Dendritic cell treated with granulocyte-macrophage colony-stimulating factor and Interleukin-4, amounts not matched to agents 40 ng/mL and 50 ng/mL, for 4 days (primary cell): ENCODE measurements at regions of chr3 and their contacts with region 1.

Region 1: DNA sequence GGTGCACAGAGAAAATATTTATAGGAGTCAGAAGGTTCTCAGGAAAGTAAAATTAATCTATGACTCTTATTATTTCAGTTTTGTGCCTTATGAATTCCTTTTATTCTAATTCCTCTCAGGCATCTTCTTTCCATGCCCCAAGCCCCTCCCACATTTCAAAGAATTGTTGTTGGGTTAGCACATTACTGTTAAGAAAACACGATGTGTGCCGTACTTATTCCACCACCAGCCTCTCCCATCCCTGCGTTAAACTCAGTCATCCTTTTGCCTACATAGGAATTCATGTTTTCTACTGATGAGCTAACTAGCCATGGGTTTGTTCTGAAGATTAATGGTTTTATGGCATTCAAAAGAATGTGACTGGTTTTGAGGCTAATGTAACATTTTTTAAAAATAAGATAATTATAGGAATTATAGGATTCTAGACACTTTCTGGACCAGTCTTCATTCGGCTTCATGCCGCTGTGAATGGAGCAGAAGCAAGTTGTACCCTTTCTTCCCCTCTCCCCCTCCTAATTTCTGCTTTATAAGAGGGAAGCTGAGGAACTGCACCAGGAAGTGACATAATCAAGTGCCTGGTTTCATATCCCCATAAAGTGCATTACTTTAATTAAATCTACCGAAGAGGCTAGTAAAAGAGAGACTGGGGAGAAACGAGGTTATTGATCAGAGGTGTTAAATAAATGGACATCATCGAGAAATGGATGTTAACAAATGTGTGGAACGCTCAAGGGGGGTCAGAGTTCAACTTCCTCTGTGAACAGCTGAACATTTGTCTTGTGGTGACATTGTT is 12.3 kb upstream of the MB21D2 start:
- H3K4me3 Mint-ChIP-seq: no peak overlapping the region
- H3K27ac Mint-ChIP-seq: peak overlapping the region; percentile 68
- H3K4me1 Mint-ChIP-seq: peaks cover 25% of the 10 kb centered on the region
- H3K27me3 Mint-ChIP-seq: peaks cover 2% of the 10 kb centered on the region

Region 2: GRCh38 chr3:192892981-192893700 is 36.8 kb before region 1 on chr3:
- intact Hi-C with region 1: loop called (anchors 5 kb)
- H3K4me3 Mint-ChIP-seq: peak overlapping the region; percentile 60
- H3K27ac Mint-ChIP-seq: peak overlapping the region; percentile 94
- H3K4me1 Mint-ChIP-seq: peaks cover 73% of the 10 kb centered on the region
- H3K27me3 Mint-ChIP-seq: no peaks in the 10 kb centered on the region

Region 3: GRCh38 chr3:192947421-192947820 is 17.5 kb after region 1 on chr3:
- intact Hi-C with region 1: no loop called
- H3K4me3 Mint-ChIP-seq: no peak overlapping the region
- H3K27ac Mint-ChIP-seq: no peak overlapping the region
- H3K4me1 Mint-ChIP-seq: no peaks in the 10 kb centered on the region
- H3K27me3 Mint-ChIP-seq: peaks cover 24% of the 10 kb centered on the region